ENCODE measurements at regions of chr17 and their contacts with region 1.

Region 1: DNA sequence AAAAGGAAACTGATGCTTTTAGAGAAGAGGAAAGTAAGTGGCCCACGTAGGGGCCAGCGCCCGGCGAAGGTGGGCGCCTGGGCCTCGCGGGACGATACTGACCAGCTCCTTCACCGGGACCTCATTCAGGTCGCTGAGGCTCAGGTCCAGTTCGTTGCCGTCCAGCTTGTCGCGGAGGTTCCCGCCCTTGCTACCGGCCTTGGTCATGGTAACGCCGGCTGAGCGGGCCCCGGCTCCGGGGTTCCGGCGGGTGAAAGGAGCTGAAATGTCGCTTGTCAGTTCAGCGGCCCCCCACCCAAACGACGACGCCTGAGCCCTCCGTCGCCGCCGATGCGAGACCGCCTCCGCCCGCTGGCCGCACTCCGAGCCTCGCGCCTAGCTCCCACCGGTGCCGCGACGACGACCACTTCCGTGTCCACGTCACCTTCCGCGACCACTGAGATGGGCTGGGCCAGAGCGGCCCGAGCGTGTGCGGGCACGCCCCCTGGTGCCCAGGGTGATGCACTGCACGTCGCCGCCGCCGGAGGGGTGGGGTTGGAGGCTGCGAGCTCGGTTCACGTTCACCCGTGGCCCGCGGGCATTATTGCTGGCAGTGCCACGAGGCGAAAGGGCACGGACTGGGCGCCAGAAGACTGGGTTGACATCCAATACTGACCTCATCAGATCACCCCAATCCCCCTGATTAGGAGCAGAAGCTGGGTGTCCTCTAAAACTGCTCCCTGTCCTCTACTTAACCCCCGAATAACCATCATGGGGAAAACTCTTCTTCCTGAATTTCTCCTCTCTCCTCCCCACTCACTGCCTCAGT is at the start of gene LRRC59:
- DNase-seq: peak; percentile 64 to 88
- H3K4me3 ChIP-seq: peak within 1 kb of the TSS; percentile 98
- H3K27ac ChIP-seq: peak within 1 kb of the TSS; percentile 79
- H3K4me1 ChIP-seq: peaks cover 46% of the 10 kb centered on the region
- H3K27me3 ChIP-seq: no peaks in the 10 kb centered on the region
- CTCF ChIP-seq: peak; percentile 96
- total RNA-seq, gene LRRC59: 72.9 and 102 TPM in 2 replicates

Region 2: GRCh38 chr17:49343273-49343672 is 1054.0 kb before region 1 on chr17:
- CTCF ChIA-PET with region 1: interaction called, 10 read pairs
- POLR2A ChIA-PET with region 1: no interaction called
- intact Hi-C with region 1: no loop called
- DNase-seq: no peak
- H3K4me3 ChIP-seq: no peak overlapping the region
- H3K27ac ChIP-seq: no peak overlapping the region
- H3K4me1 ChIP-seq: no peaks in the 10 kb centered on the region
- H3K27me3 ChIP-seq: no peaks in the 10 kb centered on the region
- CTCF ChIP-seq: no peak

Region 3: GRCh38 chr17:50380369-50381259 is 16.7 kb before region 1 on chr17:
- CTCF ChIA-PET with region 1: no interaction called
- POLR2A ChIA-PET with region 1: no interaction called
- intact Hi-C with region 1: no loop called
- DNase-seq: no peak
- H3K4me3 ChIP-seq: no peak overlapping the region
- H3K27ac ChIP-seq: no peak overlapping the region
- H3K4me1 ChIP-seq: no peaks in the 10 kb centered on the region
- H3K27me3 ChIP-seq: no peaks in the 10 kb centered on the region
- CTCF ChIP-seq: no peak; the same call in 1 of the 2 replicates

Region 4: DNA sequence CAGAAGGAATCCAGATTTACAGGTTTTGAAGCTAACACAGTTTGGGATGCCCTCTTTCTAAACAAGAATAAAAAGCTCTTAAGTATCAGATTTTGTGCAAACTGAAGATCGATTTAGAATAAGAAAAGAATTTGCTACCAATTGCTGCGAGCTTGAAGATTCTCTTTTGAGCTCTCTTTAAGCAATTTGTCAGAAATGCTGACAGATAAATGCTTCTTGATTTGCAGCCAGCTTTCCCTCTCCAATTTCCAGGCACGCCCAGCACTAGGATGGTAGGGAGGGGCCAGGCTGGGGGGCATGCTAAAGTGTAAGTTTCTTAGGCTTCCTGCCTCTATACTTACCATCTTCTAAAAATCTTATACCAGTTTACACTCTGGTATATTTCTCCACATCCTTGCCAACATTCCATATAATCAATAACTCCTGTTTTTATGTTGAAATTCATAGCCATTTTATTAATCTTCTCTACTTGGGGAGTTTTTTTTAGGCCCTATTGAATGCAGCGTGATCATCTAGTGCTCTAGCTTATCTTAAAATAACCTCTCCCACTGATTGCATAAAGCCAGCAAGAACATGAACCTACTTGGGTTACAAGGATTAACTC is 46.2 kb after region 1 on chr17:
- CTCF ChIA-PET with region 1: interaction called, 8 read pairs
- POLR2A ChIA-PET with region 1: interaction called, 4 read pairs
- intact Hi-C with region 1: loop called (anchors 2 kb)
- DNase-seq: peak; percentile 43 to 97
- H3K4me3 ChIP-seq: peak overlapping the region; percentile 47
- H3K27ac ChIP-seq: peak overlapping the region; percentile 90
- H3K4me1 ChIP-seq: peaks cover 87% of the 10 kb centered on the region
- H3K27me3 ChIP-seq: no peaks in the 10 kb centered on the region
- CTCF ChIP-seq: no peak; the same call in 1 of the 2 replicates

Region 5: GRCh38 chr17:50452610-50453300 is 55.4 kb after region 1 on chr17:
- CTCF ChIA-PET with region 1: interaction called, 3 read pairs
- POLR2A ChIA-PET with region 1: interaction called, 13 read pairs
- intact Hi-C with region 1: no loop called
- DNase-seq: peak; percentile 56 to 98
- H3K4me3 ChIP-seq: peak overlapping the region; percentile 39; the same call in 1 of the 2 replicates
- H3K27ac ChIP-seq: peak overlapping the region; percentile 64
- H3K4me1 ChIP-seq: peaks cover 72% of the 10 kb centered on the region
- H3K27me3 ChIP-seq: no peaks in the 10 kb centered on the region
- CTCF ChIP-seq: no peak